PC-9 (cell line): ENCODE measurements at regions of chr7 and their contacts with region 1.

Region 1: DNA sequence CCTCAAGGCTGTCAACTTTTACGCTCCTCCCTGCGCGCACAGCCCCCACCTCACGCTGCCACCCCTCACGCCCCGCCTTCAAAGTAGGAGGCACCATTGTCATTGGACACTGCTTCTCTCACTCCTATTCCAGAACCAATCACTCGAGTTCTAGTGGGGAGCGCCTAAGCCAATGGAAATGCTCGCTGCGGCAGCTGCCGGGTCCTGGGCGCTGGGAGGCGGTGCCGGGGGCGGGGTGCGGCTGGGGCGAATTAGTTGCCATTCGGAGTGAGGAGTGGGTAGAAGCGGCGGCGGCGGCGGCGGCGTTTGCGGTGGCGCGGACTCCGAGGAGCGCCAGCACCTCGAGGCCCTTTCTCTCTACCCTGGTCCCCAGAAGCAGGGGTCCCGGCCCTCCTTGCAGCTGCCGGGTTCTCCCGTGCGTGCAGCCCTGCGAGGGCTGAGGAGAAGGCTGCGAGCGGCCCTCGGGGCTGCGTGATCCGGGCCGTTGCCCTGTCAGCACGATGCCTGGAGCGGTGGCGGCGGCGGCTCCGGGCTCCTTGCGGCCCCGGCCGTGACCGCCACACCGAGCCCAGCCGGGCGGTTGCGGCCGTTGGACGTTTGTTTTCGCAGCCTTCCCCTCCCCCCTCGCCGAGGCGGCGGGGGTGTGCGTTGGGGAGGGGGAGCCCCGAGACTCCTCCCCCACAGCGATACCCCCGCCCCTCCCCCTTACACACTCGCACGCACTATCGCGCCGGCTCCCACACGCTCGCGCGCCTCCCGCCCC is at the start of gene GLCCI1:
- DNase-seq: peak; percentile 95 to 99
- H3K4me3 ChIP-seq: peak within 1 kb of the TSS; percentile 99
- H3K27ac ChIP-seq: peak within 1 kb of the TSS; percentile 78
- H3K4me1 ChIP-seq: peaks cover 40% of the 10 kb centered on the region
- H3K27me3 ChIP-seq: no peaks in the 10 kb centered on the region
- CTCF ChIP-seq: no peak
- total RNA-seq, gene GLCCI1: 34.3 and 42.1 TPM in 2 replicates

Region 2: DNA sequence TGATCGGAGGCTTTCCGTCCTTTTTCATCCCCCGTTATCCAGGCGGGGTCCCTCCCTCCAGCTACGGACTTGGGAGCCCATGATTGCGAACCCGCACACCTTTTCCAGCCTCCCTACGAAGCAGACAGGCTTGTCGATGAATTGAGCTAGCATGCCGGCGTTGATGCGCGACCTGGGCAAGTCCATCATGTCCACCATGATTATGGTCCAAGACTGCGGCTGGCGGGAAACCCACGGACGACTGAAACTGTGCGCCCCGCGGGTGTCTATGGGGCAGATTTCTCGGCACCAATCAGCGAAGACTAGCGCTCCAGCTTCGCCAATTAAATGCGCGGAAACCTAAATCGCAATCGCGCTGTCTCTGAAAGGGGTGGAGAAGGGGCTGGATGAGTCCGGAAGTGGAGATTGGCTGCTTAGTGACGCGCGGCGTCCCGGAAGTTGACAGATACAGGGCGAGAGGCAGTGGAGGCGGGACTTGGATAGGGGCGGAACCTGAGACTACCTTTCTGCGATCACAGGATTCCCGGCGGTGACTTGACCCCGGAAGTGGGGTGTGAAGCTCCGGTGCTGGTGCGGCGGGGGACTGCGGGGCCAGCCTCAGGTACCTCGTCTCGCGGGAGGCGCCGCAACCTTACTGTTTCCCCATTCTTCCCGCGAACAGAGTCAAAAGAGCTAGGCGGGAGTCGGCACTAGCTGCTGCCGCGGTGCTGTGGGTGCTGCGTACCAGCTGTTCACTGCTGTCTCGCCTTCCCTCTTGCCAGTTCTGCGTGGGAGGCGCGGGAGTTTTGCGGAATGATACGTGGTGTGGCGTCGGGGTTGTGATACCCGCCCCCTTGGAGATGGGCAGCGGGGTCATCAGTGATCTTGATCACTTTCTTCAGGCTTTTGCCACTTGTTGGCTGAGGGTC is 328.2 kb before region 1 on chr7 and contains the start of gene UMAD1:
- CTCF ChIA-PET with region 1: no interaction called
- POLR2A ChIA-PET with region 1: interaction called, 10 read pairs
- intact Hi-C with region 1: loop called (anchors 1 kb)
- DNase-seq: peak; percentile 99
- H3K4me3 ChIP-seq: peak within 1 kb of the TSS; percentile 83
- H3K27ac ChIP-seq: peak within 1 kb of the TSS; percentile 58
- H3K4me1 ChIP-seq: peaks cover 27% of the 10 kb centered on the region
- H3K27me3 ChIP-seq: no peaks in the 10 kb centered on the region
- CTCF ChIP-seq: no peak
- total RNA-seq, gene UMAD1: 15.5 and 20.5 TPM in 2 replicates

Region 3: GRCh38 chr7:7761340-7761980 is 207.3 kb before region 1 on chr7:
- CTCF ChIA-PET with region 1: no interaction called
- POLR2A ChIA-PET with region 1: interaction called, 14 read pairs
- intact Hi-C with region 1: loop called (anchors 2 kb)
- DNase-seq: peak in 1 of 2 experiments; percentile 54
- H3K4me3 ChIP-seq: no peak overlapping the region
- H3K27ac ChIP-seq: no peak overlapping the region
- H3K4me1 ChIP-seq: peaks cover 43% of the 10 kb centered on the region
- H3K27me3 ChIP-seq: no peaks in the 10 kb centered on the region
- CTCF ChIP-seq: peak; percentile 59; the same call in 1 of the 2 replicates

Region 4: GRCh38 chr7:7911371-7912155 is 57.2 kb before region 1 on chr7:
- CTCF ChIA-PET with region 1: interaction called, 3 read pairs
- POLR2A ChIA-PET with region 1: interaction called, 10 read pairs
- intact Hi-C with region 1: loop called (anchors 1 kb)
- DNase-seq: peak; percentile 80 to 99
- H3K4me3 ChIP-seq: no peak overlapping the region
- H3K27ac ChIP-seq: peak overlapping the region; percentile 90
- H3K4me1 ChIP-seq: peaks cover 51% of the 10 kb centered on the region
- H3K27me3 ChIP-seq: no peaks in the 10 kb centered on the region
- CTCF ChIP-seq: no peak

Region 5: DNA sequence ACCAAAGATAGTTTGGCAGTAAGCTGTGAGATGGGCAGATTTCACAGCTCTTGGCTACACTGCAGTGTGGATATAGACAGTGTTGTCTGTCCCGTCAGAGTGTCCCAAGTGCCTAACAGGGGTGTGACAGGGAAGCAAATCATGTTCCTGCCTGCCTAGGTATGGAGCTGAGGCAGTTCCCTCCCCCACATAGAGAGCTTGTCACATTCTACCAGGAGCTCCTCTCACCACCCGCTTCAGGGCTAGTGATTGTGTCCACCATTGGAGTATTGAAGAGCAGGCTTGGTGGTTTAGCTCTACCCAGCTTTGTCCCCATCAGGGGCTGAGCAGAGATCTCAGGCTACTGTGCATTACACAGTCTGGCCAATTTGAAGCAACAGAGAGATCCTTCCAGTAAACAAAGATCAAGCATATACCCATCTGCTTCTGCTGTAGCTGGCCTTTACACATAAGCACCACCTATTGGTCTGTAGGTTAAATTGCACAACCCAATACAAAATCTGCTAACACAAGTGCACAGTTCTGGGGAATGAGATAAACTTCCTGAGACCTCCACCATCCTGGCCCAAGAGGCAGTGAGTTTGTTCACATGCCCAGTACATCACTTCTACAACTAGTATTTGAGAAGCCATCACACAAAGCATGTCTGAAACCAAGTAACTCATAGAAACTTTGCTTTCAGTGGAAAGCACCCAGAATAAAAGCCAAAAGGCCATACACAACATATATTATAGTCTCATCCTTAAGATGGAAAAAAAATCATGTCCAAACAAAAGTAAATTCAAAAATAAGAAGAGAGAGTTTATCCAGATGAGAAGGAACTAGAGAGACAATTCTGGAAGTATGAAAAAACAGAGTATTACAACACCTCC is 67.2 kb after region 1 on chr7:
- CTCF ChIA-PET with region 1: interaction called, 6 read pairs
- POLR2A ChIA-PET with region 1: interaction called, 3 read pairs
- intact Hi-C with region 1: loop called (anchors 2 kb)
- DNase-seq: no peak
- H3K4me3 ChIP-seq: no peak overlapping the region
- H3K27ac ChIP-seq: no peak overlapping the region
- H3K4me1 ChIP-seq: no peaks in the 10 kb centered on the region
- H3K27me3 ChIP-seq: no peaks in the 10 kb centered on the region
- CTCF ChIP-seq: peak; percentile 69

Region 6: GRCh38 chr7:8357536-8357935 is 388.8 kb after region 1 on chr7:
- CTCF ChIA-PET with region 1: no interaction called
- POLR2A ChIA-PET with region 1: no interaction called
- intact Hi-C with region 1: no loop called
- DNase-seq: no peak
- H3K4me3 ChIP-seq: no peak overlapping the region
- H3K27ac ChIP-seq: no peak overlapping the region
- H3K4me1 ChIP-seq: peaks cover 12% of the 10 kb centered on the region
- H3K27me3 ChIP-seq: no peaks in the 10 kb centered on the region
- CTCF ChIP-seq: no peak